ENCODE measurements at regions of chr15 and their contacts with region 1.

Region 1: DNA sequence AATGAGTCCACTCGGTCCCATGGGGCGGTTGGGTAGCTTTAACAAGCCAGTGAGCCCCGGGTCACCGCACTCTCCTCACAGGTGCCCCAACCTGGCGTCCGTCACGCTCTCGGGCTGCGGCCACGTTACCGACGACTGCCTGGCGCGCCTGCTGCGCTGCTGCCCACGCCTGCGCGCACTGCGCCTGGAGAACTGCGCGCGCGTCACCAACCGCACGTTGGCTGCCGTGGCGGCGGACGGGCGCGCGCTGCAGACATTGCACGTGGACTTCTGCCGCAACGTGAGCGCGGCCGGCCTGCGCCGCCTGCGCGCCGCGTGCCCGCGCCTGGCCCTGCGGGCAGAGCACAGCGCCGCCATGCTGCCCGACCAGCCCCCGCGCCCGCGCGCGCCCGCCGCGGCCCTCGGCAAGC is 3.4 kb downstream of the FBXL22 start:
- DNase-seq: peak in 1 of 2 experiments; percentile 76
- H3K4me3 ChIP-seq: peak overlapping the region; percentile 36 to 78 (median 71)
- H3K27ac ChIP-seq: no peak overlapping the region
- H3K4me1 ChIP-seq: peaks cover 0 to 14% (median 7%) of the 10 kb centered on the region in 4 experiments; a peak in 5 of 7 replicates
- H3K27me3 ChIP-seq: peaks cover 0 to 30% (median 19%) of the 10 kb centered on the region in 4 experiments; a peak in 6 of 7 replicates
- CTCF ChIP-seq: peak in 2 of 3 experiments; percentile 2 to 28; a peak in 2 of 4 replicates
- EP300 ChIP-seq: no peak
- POLR2A ChIP-seq: peak in 1 of 2 experiments; percentile 34; a peak in 2 of 3 replicates
- RAD21 ChIP-seq: peak in 1 of 2 experiments; percentile 14; a peak in 1 of 4 replicates

Region 2: GRCh38 chr15:63466378-63467192 is 134.0 kb before region 1 on chr15:
- CTCF ChIA-PET with region 1: interaction called, 18 read pairs
- POLR2A ChIA-PET with region 1: no interaction called
- DNase-seq: peak in 1 of 2 experiments; percentile 55
- H3K4me3 ChIP-seq: no peak overlapping the region
- H3K27ac ChIP-seq: no peak overlapping the region
- H3K4me1 ChIP-seq: no peaks in the 10 kb centered on the region
- H3K27me3 ChIP-seq: no peaks in the 10 kb centered on the region
- CTCF ChIP-seq: peak; percentile 18 to 84 (median 68)
- EP300 ChIP-seq: no peak
- POLR2A ChIP-seq: no peak
- RAD21 ChIP-seq: peak; percentile 86

Region 3: DNA sequence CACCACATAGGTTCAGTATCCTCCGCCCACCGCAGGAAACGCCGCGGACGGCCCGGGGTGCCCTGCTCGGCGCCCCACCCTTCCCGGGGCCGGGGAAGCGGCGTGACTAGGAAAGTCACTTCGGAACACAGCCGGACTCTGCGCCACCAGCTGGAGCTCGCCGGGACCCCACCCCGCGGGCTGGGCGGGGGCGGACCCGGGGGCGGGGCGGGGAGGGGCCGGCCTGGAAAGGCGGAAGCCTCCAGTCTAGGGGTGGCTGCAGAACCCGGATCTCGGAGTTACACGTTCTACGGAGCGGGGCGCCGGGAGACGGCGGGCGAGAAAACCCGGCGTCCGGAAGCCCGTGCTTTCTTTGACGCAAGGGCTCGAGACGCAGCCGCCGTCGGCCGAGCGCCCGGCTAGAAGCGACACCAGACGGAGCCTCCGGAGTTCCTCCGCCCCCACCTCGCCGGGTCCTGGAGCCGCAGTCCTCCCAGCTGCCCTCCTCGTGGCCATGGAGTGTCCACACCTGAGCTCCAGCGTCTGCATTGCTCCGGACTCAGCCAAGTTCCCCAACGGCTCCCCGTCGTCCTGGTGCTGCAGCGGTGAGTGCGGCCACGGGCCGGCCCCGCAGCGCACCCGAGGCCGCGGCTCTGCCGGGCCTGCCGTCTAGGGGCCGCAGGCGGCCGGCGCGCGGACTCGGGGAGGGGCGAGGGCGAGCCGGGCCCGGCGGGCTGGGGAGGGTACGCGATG is 96.2 kb before region 1 on chr15 and contains the start of gene USP3:
- CTCF ChIA-PET with region 1: interaction called, 8 read pairs
- POLR2A ChIA-PET with region 1: interaction called, 11 read pairs
- DNase-seq: peak; percentile 72 to 98
- H3K4me3 ChIP-seq: peak within 1 kb of the TSS; percentile 53 to 74 (median 62)
- H3K27ac ChIP-seq: peak within 1 kb of the TSS; percentile 35; the same call in 1 of the 2 replicates
- H3K4me1 ChIP-seq: peaks cover 7 to 16% (median 12%) of the 10 kb centered on the region in 4 experiments
- H3K27me3 ChIP-seq: peaks cover 26 to 77% (median 62%) of the 10 kb centered on the region in 4 experiments
- CTCF ChIP-seq: no peak
- EP300 ChIP-seq: peak in 1 of 2 experiments; percentile 88; a peak in 2 of 3 replicates
- POLR2A ChIP-seq: peak; percentile 64 to 74
- RAD21 ChIP-seq: peak in 1 of 2 experiments; percentile 20; a peak in 2 of 4 replicates
- total RNA-seq, gene USP3: 10.8 and 15.5 TPM in 2 replicates

Region 4: DNA sequence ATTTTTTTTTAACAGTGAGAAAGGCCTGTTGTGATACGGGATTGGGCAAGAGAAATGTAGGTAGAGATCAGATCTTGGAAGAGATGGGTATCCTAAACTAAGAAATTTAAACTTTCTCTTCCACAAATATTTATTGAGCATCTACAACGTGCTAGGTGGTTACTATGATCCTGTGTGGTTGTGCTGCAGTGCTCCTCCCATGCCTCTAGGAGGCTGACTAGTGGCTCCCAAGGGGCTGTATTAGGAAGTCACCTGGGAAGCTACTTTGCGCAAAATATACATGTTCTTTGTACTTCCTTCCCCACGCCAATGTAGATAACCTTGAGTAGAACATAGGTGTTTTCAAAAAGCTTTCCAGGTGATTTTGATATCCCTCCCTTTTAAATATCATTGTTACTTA is 69.0 kb before region 1 on chr15:
- CTCF ChIA-PET with region 1: interaction called, 21 read pairs
- POLR2A ChIA-PET with region 1: interaction called, 4 read pairs
- DNase-seq: no peak
- H3K4me3 ChIP-seq: no peak overlapping the region
- H3K27ac ChIP-seq: no peak overlapping the region
- H3K4me1 ChIP-seq: peaks cover 3 to 11% (median 6%) of the 10 kb centered on the region in 4 experiments; a peak in 6 of 7 replicates
- H3K27me3 ChIP-seq: no peaks in the 10 kb centered on the region
- CTCF ChIP-seq: peak; percentile 51 to 73 (median 69)
- EP300 ChIP-seq: no peak
- POLR2A ChIP-seq: no peak
- RAD21 ChIP-seq: peak; percentile 24 to 56; a peak in 3 of 4 replicates

Region 5: GRCh38 chr15:63560741-63561448 is 39.7 kb before region 1 on chr15:
- CTCF ChIA-PET with region 1: interaction called, 10 read pairs
- POLR2A ChIA-PET with region 1: no interaction called
- DNase-seq: no peak
- H3K4me3 ChIP-seq: no peak overlapping the region
- H3K27ac ChIP-seq: no peak overlapping the region
- H3K4me1 ChIP-seq: peaks cover 3 to 18% (median 14%) of the 10 kb centered on the region in 4 experiments; a peak in 6 of 7 replicates
- H3K27me3 ChIP-seq: no peaks in the 10 kb centered on the region
- CTCF ChIP-seq: no peak
- EP300 ChIP-seq: no peak
- POLR2A ChIP-seq: no peak
- RAD21 ChIP-seq: no peak

Region 6: GRCh38 chr15:63587527-63587926 is 13.1 kb before region 1 on chr15:
- CTCF ChIA-PET with region 1: interaction called, 39 read pairs
- POLR2A ChIA-PET with region 1: interaction called, 5 read pairs
- DNase-seq: no peak
- H3K4me3 ChIP-seq: no peak overlapping the region
- H3K27ac ChIP-seq: no peak overlapping the region
- H3K4me1 ChIP-seq: no peaks in the 10 kb centered on the region
- H3K27me3 ChIP-seq: no peaks in the 10 kb centered on the region
- CTCF ChIP-seq: no peak
- EP300 ChIP-seq: no peak
- POLR2A ChIP-seq: no peak
- RAD21 ChIP-seq: no peak

Region 7: GRCh38 chr15:63783441-63783840 is 182.8 kb after region 1 on chr15:
- CTCF ChIA-PET with region 1: no interaction called
- POLR2A ChIA-PET with region 1: no interaction called
- DNase-seq: no peak
- H3K4me3 ChIP-seq: no peak overlapping the region
- H3K27ac ChIP-seq: no peak overlapping the region
- H3K4me1 ChIP-seq: no peaks in the 10 kb centered on the region
- H3K27me3 ChIP-seq: no peaks in the 10 kb centered on the region
- CTCF ChIP-seq: no peak
- EP300 ChIP-seq: no peak
- POLR2A ChIP-seq: no peak
- RAD21 ChIP-seq: no peak

Region 8: GRCh38 chr15:64112904-64113303 is 512.3 kb after region 1 on chr15:
- CTCF ChIA-PET with region 1: no interaction called
- POLR2A ChIA-PET with region 1: no interaction called
- DNase-seq: no peak
- H3K4me3 ChIP-seq: no peak overlapping the region
- H3K27ac ChIP-seq: no peak overlapping the region
- H3K4me1 ChIP-seq: peaks cover 0 to 4% (median 0%) of the 10 kb centered on the region in 4 experiments; a peak in 1 of 7 replicates
- H3K27me3 ChIP-seq: no peaks in the 10 kb centered on the region
- CTCF ChIP-seq: no peak
- EP300 ChIP-seq: no peak
- POLR2A ChIP-seq: no peak
- RAD21 ChIP-seq: no peak

Region 9: GRCh38 chr15:64224511-64224910 is 623.9 kb after region 1 on chr15:
- CTCF ChIA-PET with region 1: no interaction called
- POLR2A ChIA-PET with region 1: no interaction called
- DNase-seq: no peak
- H3K4me3 ChIP-seq: no peak overlapping the region
- H3K27ac ChIP-seq: no peak overlapping the region
- H3K4me1 ChIP-seq: no peaks in the 10 kb centered on the region
- H3K27me3 ChIP-seq: no peaks in the 10 kb centered on the region
- CTCF ChIP-seq: no peak
- EP300 ChIP-seq: no peak
- POLR2A ChIP-seq: no peak
- RAD21 ChIP-seq: no peak